Calu3 (cell line): ENCODE measurements at regions of chr2 and their contacts with region 1.

Region 1: GRCh38 chr2:179580378-179581146 is 280.9 kb downstream of the ZNF385B start:
- DNase-seq: peak; percentile 74
- H3K4me3 Mint-ChIP-seq: no peak overlapping the region
- H3K27ac Mint-ChIP-seq: peak overlapping the region; percentile 63
- H3K4me1 Mint-ChIP-seq: peaks cover 21% of the 10 kb centered on the region
- H3K27me3 Mint-ChIP-seq: no peaks in the 10 kb centered on the region
- CTCF ChIP-seq: no peak

Region 2: DNA sequence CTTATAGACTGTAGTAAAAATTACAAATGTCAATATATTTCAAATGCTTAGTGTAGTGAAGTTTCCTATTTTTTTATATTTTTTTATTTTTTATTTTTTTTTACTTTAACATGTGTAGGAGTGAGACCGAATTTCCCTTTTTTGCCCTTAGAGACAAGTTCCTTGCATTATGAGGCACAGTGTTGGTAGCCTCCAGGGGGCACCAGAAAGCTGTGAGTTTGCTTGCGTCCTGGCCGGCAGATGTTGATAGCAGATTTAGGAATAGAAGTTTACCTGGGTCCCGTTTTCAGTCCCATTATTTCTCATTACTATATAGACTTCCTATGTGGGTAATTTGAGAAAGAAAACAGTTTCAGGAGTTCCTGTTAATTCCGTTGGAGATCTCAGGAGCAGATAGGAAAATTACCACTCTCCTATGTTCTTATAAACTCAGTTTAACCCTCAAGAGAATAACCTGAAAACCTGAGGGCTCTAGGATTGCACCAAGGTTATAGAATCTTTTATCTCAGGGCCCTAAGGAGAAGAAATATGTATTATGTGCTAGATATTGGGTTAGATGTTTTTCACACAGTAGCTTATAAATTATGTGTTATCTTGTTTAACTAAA is 158.4 kb before region 1 on chr2:
- CTCF ChIA-PET with region 1: interaction called, 3 read pairs
- intact Hi-C with region 1: loop called (anchors 1 kb)
- DNase-seq: peak; percentile 85
- H3K4me3 Mint-ChIP-seq: no peak overlapping the region
- H3K27ac Mint-ChIP-seq: no peak overlapping the region
- H3K4me1 Mint-ChIP-seq: peaks cover 6% of the 10 kb centered on the region
- H3K27me3 Mint-ChIP-seq: no peaks in the 10 kb centered on the region
- CTCF ChIP-seq: peak; percentile 84

Region 3: GRCh38 chr2:179440642-179441251 is 139.8 kb before region 1 on chr2:
- CTCF ChIA-PET with region 1: no interaction called
- intact Hi-C with region 1: loop called (anchors 5 kb)
- DNase-seq: no peak
- H3K4me3 Mint-ChIP-seq: no peak overlapping the region
- H3K27ac Mint-ChIP-seq: no peak overlapping the region
- H3K4me1 Mint-ChIP-seq: peaks cover 32% of the 10 kb centered on the region
- H3K27me3 Mint-ChIP-seq: no peaks in the 10 kb centered on the region
- CTCF ChIP-seq: peak; percentile 26

Region 4: GRCh38 chr2:179460181-179460929 is 120.2 kb before region 1 on chr2:
- CTCF ChIA-PET with region 1: interaction called, 3 read pairs
- intact Hi-C with region 1: loop called (anchors 2 kb)
- DNase-seq: peak; percentile 75
- H3K4me3 Mint-ChIP-seq: peak overlapping the region; percentile 7
- H3K27ac Mint-ChIP-seq: peak overlapping the region; percentile 98
- H3K4me1 Mint-ChIP-seq: peaks cover 32% of the 10 kb centered on the region
- H3K27me3 Mint-ChIP-seq: no peaks in the 10 kb centered on the region
- CTCF ChIP-seq: no peak

Region 5: DNA sequence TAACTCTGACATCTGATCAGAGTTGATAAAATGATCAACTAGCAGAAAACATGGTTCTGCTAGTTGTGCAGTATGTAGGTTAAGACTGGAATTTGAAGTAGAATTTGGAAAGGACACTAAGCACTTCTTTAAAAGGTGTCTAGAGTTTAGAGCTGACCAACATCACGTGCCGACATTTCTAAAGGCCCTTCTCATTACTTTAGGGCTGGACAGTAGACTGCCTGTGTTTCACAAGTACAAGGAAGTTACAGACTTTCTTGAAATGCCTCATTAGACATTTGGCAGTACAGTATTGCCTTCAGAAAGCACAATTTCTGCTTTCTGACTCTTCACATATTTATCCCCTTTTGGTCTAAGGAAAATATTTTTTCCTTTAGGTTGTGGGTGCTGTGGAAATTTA is 25.6 kb after region 1 on chr2:
- CTCF ChIA-PET with region 1: no interaction called
- intact Hi-C with region 1: loop called (anchors 2 kb)
- DNase-seq: peak; percentile 4
- H3K4me3 Mint-ChIP-seq: no peak overlapping the region
- H3K27ac Mint-ChIP-seq: no peak overlapping the region
- H3K4me1 Mint-ChIP-seq: peaks cover 10% of the 10 kb centered on the region
- H3K27me3 Mint-ChIP-seq: no peaks in the 10 kb centered on the region
- CTCF ChIP-seq: no peak

Region 6: GRCh38 chr2:179655627-179656026 is 75.1 kb after region 1 on chr2:
- CTCF ChIA-PET with region 1: no interaction called
- intact Hi-C with region 1: no loop called
- DNase-seq: no peak
- H3K4me3 Mint-ChIP-seq: no peak overlapping the region
- H3K27ac Mint-ChIP-seq: no peak overlapping the region
- H3K4me1 Mint-ChIP-seq: no peaks in the 10 kb centered on the region
- H3K27me3 Mint-ChIP-seq: no peaks in the 10 kb centered on the region
- CTCF ChIP-seq: no peak